Tibial artery (tissue), 4 donors: ENCODE measurements at regions of chr12 and their contacts with region 1.

Region 1: DNA sequence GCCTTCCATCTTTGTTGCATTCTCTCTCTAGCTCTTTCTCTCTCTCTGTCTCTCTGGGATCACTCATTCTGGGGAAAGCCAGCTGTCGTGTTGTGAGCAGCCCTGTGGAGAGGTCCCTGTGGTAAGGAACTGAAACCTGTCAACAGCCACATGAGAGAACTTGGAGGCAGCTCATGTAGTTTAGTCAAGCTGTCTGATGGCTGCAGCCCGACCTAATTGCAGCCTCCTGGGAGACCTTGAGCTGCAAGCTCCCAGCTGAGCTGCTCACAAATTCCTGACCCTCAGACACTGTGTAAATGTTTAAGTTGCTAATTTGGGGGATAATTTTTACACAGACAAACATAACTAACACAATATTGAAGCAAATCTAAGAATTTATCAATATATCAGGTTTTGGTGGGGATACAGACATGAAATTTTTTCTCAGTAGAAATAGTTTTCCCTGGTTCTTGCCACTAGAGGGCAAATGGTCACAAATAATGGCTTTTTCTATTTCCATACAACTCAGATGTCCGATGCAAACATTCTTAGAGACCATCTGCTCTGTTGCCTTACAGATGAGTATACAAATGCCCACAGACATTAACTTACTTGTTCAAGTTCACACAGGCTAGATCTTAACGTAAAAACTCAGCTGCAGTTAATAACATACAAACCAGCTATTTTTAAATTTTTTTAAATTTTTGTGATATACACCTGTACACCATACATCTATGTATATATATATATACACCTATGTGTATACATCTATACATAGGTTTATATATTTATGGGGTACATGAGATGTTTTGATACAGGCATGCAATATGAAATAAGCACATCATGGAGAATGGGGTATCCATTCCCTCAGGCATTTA is 15.5 kb upstream of the KRR1 start:
- DNase-seq: no peak
- H3K4me3 ChIP-seq: no peak overlapping the region
- H3K27ac ChIP-seq: no peak overlapping the region
- H3K4me1 ChIP-seq: no peaks in the 10 kb centered on the region
- H3K27me3 ChIP-seq: no peaks in the 10 kb centered on the region
- CTCF ChIP-seq: peak; percentile 55 to 60

Region 2: DNA sequence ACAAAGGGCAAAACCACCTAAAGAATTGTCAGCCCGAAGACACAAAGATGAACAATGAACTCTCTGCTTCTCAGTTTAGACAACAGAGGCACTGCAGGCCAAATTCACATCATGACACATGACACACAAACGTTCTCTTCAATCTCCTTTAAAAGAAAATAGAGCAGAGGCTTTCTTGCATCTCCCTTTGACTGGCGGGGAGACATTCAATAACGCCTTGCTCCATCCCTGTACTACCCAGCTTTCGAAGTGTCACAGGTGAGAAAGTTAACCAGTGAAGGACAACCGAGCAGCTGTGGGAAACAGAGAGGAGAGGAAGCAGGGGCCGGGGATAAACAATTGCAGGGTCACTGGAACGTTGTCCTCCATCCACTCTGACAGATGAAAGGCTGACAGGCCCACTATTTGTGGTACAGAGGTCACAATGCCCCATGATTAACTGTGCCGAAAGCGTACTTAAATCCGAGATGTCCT is 373.9 kb after region 1 on chr12:
- intact Hi-C with region 1: no loop called
- DNase-seq: no peak
- H3K4me3 ChIP-seq: no peak overlapping the region
- H3K27ac ChIP-seq: no peak overlapping the region
- H3K4me1 ChIP-seq: no peaks in the 10 kb centered on the region
- H3K27me3 ChIP-seq: no peaks in the 10 kb centered on the region
- CTCF ChIP-seq: no peak

Region 3: GRCh38 chr12:76037130-76038103 is 510.5 kb after region 1 on chr12:
- intact Hi-C with region 1: loop called (anchors 2 kb)
- DNase-seq: no peak
- H3K4me3 ChIP-seq: no peak overlapping the region
- H3K27ac ChIP-seq: no peak overlapping the region
- H3K4me1 ChIP-seq: peaks cover 0 to 16% (median 1%) of the 10 kb centered on the region in 4 donors
- H3K27me3 ChIP-seq: no peaks in the 10 kb centered on the region
- CTCF ChIP-seq: peak; percentile 82 to 91